CD8-positive, alpha-beta T cell (primary cell): ENCODE measurements at regions of chr17 and their contacts with region 1.

Region 1: GRCh38 chr17:48878918-48879898 is 13.4 kb upstream of the ATP5MC1 start:
- DNase-seq: peak; percentile 24 to 85 (median 58)
- ATAC-seq: peak; percentile 99
- H3K4me3 ChIP-seq: no peak overlapping the region
- H3K4me3 Mint-ChIP-seq: no peak overlapping the region
- H3K27ac ChIP-seq: no peak overlapping the region
- H3K27ac Mint-ChIP-seq: no peak overlapping the region
- H3K4me1 ChIP-seq: peaks cover 3% of the 10 kb centered on the region
- H3K4me1 Mint-ChIP-seq: no peaks in the 10 kb centered on the region
- H3K27me3 ChIP-seq: no peaks in the 10 kb centered on the region
- H3K27me3 Mint-ChIP-seq: peaks cover 11% of the 10 kb centered on the region
- CTCF ChIP-seq: peak; percentile 99

Region 2: DNA sequence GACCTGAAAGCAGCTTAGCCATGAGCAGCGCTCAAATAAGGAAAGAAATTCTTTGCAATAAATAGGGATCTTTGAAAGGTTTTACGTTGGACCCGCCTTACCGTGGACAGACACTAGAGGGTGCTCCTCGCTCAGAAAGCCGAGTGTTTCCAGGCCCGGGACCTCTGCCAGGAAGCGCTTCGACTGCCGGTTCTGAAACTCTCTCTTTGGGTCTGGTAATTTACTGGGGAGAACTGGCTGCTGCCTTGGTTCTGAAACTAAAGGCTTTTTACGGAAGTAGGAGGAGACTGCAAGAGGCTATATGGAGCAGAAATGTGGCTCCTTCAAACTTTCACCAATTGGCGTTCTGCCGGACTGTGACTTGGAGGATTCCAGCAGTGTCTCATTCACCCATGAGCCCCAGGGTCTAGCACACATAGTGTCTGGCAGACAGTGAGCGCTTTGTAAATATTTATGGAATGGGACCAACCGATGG is 207.5 kb before region 1 on chr17:
- CTCF ChIA-PET with region 1: interaction called, 107 read pairs
- POLR2A ChIA-PET with region 1: no interaction called
- intact Hi-C with region 1: loop called in 1 of 2 experiments (anchors 1 kb)
- DNase-seq: peak; percentile 40 to 81 (median 73)
- ATAC-seq: peak; percentile 93
- H3K4me3 ChIP-seq: no peak overlapping the region
- H3K4me3 Mint-ChIP-seq: peak overlapping the region; percentile 32
- H3K27ac ChIP-seq: no peak overlapping the region
- H3K27ac Mint-ChIP-seq: no peak overlapping the region
- H3K4me1 ChIP-seq: peaks cover 5% of the 10 kb centered on the region
- H3K4me1 Mint-ChIP-seq: peaks cover 4% of the 10 kb centered on the region
- H3K27me3 ChIP-seq: no peaks in the 10 kb centered on the region
- H3K27me3 Mint-ChIP-seq: peaks cover 50% of the 10 kb centered on the region
- CTCF ChIP-seq: peak; percentile 83

Region 3: DNA sequence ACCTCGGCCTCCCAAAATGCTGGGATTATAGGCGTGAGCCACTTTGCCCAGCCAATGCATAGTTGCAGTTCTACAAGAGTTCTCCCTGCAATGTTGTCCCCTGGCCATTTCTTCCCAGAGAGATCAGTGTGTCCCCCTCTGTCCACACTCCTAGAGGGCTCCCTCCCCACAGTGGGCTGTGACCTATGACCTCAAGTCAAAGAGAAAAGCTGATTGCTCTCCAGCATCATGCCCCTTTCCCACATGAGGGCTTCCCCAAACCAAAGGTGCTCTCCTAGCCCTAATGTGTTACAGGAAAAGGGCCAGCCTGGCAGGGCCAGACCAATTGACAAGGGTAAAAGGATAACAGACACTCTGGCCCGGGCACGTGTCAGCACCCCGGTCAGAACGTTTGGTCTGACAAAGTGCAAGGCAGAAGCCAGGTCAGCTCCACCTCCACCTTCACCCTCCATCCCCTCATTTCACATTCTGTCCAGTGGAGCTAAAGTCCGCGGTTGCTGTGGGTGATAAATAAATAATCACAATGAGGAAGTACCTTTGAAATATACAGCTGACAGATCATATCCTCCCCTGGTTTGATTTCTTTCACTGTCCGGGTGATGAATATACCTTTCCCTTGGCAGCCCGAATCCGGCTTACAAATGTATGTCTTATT is 80.0 kb before region 1 on chr17:
- CTCF ChIA-PET with region 1: interaction called, 706 read pairs
- POLR2A ChIA-PET with region 1: interaction called, 6 read pairs
- intact Hi-C with region 1: no loop called
- DNase-seq: no peak
- ATAC-seq: no peak
- H3K4me3 ChIP-seq: no peak overlapping the region
- H3K4me3 Mint-ChIP-seq: no peak overlapping the region
- H3K27ac ChIP-seq: no peak overlapping the region
- H3K27ac Mint-ChIP-seq: no peak overlapping the region
- H3K4me1 ChIP-seq: no peaks in the 10 kb centered on the region
- H3K4me1 Mint-ChIP-seq: no peaks in the 10 kb centered on the region
- H3K27me3 ChIP-seq: peaks cover 0 to 2% of the 10 kb centered on the region in 2 experiments
- H3K27me3 Mint-ChIP-seq: peaks cover 33% of the 10 kb centered on the region
- CTCF ChIP-seq: no peak

Region 4: DNA sequence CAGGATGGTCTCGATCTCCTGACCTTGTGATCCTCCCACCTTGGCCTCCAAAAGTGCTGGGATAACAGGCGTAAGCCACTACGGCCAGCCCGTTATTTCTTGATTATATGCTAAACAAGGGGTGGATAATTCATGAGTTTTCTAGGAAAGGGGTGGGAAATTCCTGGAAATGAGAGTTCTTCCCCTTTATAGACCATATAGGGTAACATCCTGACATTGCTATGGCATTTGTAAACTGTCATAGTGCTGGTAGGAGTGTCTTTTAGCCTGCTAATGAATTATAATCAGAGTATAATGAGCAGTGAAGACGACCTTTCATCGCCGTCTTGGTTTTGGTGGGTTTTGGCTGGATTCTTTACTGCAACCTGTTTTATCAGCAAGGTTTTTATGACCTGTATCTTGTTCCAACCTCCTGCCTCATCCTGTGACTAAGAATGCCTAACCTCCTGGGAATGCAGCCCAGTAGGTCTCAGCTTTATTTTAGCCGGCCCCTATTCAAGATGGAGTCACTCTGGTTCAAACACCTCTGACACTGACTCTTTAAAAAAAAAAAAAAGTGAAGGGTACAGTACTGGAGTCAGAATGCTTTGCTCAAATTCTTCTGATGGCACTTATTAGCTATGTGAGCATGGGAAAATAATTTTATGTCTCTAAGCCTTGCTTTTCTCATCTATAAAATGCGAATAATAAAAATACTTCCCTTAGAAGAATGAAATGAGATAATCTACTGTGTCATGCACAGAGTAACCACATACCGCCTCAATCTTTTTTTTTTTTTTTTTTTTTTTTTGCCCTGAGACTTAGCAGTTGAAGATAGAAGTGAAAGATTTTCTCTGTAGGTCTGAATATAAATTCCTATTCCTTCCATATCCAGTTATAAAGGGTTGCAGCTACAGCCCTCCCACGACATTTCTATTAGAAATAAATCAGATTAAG is 53.5 kb before region 1 on chr17:
- CTCF ChIA-PET with region 1: interaction called, 26 read pairs
- POLR2A ChIA-PET with region 1: no interaction called
- intact Hi-C with region 1: no loop called
- DNase-seq: no peak
- ATAC-seq: no peak
- H3K4me3 ChIP-seq: no peak overlapping the region
- H3K4me3 Mint-ChIP-seq: no peak overlapping the region
- H3K27ac ChIP-seq: no peak overlapping the region
- H3K27ac Mint-ChIP-seq: no peak overlapping the region
- H3K4me1 ChIP-seq: peaks cover 4% of the 10 kb centered on the region
- H3K4me1 Mint-ChIP-seq: peaks cover 6% of the 10 kb centered on the region
- H3K27me3 ChIP-seq: peaks cover 2 to 4% of the 10 kb centered on the region in 2 experiments
- H3K27me3 Mint-ChIP-seq: peaks cover 16% of the 10 kb centered on the region
- CTCF ChIP-seq: no peak

Region 5: DNA sequence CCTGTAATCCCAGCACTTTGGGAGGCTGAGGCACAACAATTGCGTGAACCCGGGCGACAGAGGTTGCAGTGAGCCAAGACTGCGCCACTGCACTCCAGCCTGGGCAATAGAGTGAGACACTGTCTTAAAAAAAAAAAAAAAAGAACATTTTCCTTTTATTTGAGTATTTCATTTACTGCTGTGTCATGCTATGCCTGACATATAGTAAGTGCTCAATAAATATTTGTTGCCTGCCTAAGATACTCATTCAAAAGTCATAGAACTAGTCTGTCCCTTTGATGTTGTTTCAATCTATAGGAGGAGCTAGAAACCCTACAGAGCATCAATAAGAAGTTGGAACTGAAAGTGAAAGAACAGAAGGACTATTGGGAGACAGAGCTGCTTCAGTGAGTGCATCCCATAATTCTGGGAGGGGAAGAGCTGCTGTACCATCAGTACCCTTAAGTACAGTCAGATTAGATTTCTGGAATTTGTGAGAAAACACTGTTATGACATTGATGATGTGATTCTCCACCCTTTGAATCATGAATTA is 28.4 kb before region 1 on chr17:
- CTCF ChIA-PET with region 1: interaction called, 13 read pairs
- POLR2A ChIA-PET with region 1: no interaction called
- intact Hi-C with region 1: no loop called
- DNase-seq: peak in 1 of 9 experiments; percentile 25
- ATAC-seq: peak; percentile 34
- H3K4me3 ChIP-seq: no peak overlapping the region
- H3K4me3 Mint-ChIP-seq: no peak overlapping the region
- H3K27ac ChIP-seq: no peak overlapping the region
- H3K27ac Mint-ChIP-seq: no peak overlapping the region
- H3K4me1 ChIP-seq: no peaks in the 10 kb centered on the region
- H3K4me1 Mint-ChIP-seq: peaks cover 5% of the 10 kb centered on the region
- H3K27me3 ChIP-seq: no peaks in the 10 kb centered on the region
- H3K27me3 Mint-ChIP-seq: no peaks in the 10 kb centered on the region
- CTCF ChIP-seq: no peak

Region 6: DNA sequence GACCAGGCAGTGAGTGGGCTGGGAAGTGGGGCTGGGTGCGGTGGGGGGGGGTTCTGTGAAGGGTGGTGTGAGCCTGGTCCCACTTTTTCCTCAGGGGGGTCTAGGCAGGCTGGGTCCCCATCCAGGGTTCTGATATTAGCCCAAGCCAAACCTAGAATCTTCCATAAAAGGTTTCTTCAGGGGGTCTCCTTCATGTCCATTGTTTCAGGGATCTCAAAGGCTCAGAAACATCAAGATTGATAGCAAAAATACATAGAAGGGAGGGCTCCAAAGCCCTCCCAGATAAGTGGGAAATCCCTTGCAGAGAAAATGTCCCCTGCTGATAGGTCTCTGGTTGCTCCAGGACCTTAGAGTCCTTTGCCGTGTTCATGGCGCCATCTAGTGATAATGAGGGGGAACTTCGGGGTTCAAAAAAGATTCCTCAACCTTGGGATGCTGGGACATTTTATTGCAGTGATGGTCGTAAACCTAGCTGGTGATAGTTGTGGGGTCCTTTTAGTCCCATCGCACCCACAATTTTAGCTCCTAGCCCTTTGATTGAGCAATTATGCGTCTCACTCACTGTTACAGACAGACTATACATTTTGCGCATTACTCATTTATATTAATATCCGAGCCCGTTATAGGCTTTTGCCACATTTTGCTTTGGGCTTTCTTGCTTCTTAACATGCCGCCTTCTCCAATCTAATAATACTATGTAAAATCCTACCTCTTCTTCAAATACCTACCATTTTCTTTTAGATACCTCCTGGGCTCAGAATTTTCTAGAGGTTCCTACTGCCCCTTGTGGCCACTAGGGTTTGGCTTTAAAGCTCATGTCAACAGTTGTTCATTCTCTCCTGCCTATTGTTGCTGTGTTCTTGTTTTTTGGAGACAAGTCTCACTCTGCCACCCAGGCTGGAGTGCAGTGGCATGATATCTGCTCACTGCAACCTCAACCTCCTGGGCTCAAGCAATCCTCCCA is 153.0 kb after region 1 on chr17:
- CTCF ChIA-PET with region 1: interaction called, 5 read pairs
- POLR2A ChIA-PET with region 1: no interaction called
- intact Hi-C with region 1: loop called in 1 of 2 experiments (anchors 5 kb)
- DNase-seq: peak in 8 of 9 experiments; percentile 3 to 72 (median 34)
- ATAC-seq: peak; percentile 82
- H3K4me3 ChIP-seq: no peak overlapping the region
- H3K4me3 Mint-ChIP-seq: no peak overlapping the region
- H3K27ac ChIP-seq: no peak overlapping the region
- H3K27ac Mint-ChIP-seq: no peak overlapping the region
- H3K4me1 ChIP-seq: no peaks in the 10 kb centered on the region
- H3K4me1 Mint-ChIP-seq: peaks cover 3% of the 10 kb centered on the region
- H3K27me3 ChIP-seq: peaks cover 0 to 2% of the 10 kb centered on the region in 2 experiments
- H3K27me3 Mint-ChIP-seq: peaks cover 13% of the 10 kb centered on the region
- CTCF ChIP-seq: peak; percentile 84